ENCODE measurements at regions of chr22 and their contacts with region 1.

Region 1: GRCh38 chr22:37817705-37818408 is 5.3 kb upstream of the GALR3 start:
- DNase-seq: peak; percentile 89 to 93 (median 90)
- H3K4me3 ChIP-seq: peak overlapping the region; percentile 32 to 49 (median 33)
- H3K27ac ChIP-seq: no peak overlapping the region
- H3K4me1 ChIP-seq: peaks cover 0 to 16% (median 0%) of the 10 kb centered on the region in 3 donors
- H3K27me3 ChIP-seq: peaks cover 11% of the 10 kb centered on the region
- CTCF ChIP-seq: peak; percentile 98

Region 2: GRCh38 chr22:37328017-37328416 is 489.8 kb before region 1 on chr22:
- intact Hi-C with region 1: no loop called
- DNase-seq: no peak
- H3K4me3 ChIP-seq: no peak overlapping the region
- H3K27ac ChIP-seq: no peak overlapping the region
- H3K4me1 ChIP-seq: peaks cover 0 to 10% (median 7%) of the 10 kb centered on the region in 3 donors
- H3K27me3 ChIP-seq: peaks cover 17% of the 10 kb centered on the region
- CTCF ChIP-seq: no peak

Region 3: DNA sequence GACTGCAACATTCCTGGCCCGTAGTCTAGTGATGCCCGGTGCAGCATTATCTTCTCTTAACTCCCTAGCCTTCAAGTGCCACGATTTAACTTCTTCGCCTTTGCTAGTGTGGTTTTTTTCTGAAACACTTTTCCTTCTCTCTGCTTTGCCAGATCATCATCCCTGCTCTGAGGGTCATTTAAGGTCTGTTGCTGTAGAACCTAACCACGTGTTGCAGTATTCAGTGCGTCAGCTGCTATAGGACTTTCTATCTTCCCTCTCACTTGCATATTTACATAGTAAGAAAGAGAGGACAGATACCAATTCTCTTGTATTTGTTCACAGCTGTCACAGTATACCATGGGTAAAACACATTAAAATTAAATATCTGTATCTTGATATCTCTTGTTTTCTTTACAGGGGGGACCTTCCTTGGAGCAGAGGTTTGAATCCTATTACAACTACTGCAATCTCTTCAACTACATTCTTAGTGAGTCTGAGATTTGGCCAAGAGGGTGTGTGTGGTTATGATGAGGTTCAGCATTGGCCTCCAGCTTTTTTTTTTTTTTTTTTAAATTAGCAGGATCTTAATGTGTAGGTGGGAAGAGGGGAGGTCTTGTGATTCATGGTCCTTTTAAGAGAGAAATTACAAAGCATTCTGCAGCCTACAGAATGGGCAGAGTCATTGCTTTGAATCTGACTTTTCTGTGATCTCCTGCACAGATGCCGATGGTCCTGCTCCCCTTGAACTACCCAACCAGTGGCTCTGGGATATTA is 44.9 kb after region 1 on chr22:
- intact Hi-C with region 1: loop called (anchors 10 kb)
- DNase-seq: no peak
- H3K4me3 ChIP-seq: no peak overlapping the region
- H3K27ac ChIP-seq: no peak overlapping the region
- H3K4me1 ChIP-seq: peaks cover 0 to 7% (median 0%) of the 10 kb centered on the region in 3 donors
- H3K27me3 ChIP-seq: no peaks in the 10 kb centered on the region
- CTCF ChIP-seq: no peak

Region 4: DNA sequence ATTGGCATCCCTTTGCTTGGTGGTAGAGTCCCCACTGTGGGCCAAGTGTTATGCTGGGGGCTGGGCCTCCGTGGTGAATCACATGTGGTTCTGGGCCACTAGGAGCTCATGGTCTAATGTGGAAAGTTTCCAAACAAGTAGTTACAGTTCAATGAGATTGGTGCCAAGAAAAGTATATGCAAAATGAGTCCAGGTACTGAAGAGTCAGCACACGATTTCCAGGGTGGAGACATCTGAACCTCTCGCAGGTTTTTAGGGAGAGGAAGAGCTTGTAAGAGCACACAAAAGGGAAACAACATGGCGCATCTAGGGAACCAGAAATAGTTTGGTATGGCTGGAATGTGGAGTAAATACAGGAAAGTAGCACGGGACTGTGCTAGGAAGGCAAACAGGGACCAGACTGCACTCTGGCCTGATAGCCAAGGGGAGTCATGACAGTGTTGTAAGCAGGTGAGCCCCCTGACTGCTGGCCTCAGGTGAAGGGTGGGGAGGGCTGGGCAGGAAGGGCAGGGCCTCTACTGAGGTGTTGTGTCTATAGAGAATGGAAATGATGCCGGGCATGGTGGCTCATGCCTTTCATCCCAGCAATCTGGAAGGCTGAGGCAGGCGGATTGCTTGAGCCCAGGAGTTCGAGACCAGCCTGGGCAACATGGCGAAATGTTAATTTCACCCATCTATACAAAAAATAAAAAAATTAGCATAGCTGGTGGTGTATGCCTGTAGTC is 148.2 kb after region 1 on chr22:
- intact Hi-C with region 1: loop called (anchors 10 kb)
- DNase-seq: no peak
- H3K4me3 ChIP-seq: no peak overlapping the region
- H3K27ac ChIP-seq: no peak overlapping the region
- H3K4me1 ChIP-seq: peaks cover 0 to 7% (median 6%) of the 10 kb centered on the region in 3 donors
- H3K27me3 ChIP-seq: no peaks in the 10 kb centered on the region
- CTCF ChIP-seq: no peak